Upper lobe of right lung (tissue), 1 donor: ENCODE measurements at regions of chr6 and their contacts with region 1.

Region 1: DNA sequence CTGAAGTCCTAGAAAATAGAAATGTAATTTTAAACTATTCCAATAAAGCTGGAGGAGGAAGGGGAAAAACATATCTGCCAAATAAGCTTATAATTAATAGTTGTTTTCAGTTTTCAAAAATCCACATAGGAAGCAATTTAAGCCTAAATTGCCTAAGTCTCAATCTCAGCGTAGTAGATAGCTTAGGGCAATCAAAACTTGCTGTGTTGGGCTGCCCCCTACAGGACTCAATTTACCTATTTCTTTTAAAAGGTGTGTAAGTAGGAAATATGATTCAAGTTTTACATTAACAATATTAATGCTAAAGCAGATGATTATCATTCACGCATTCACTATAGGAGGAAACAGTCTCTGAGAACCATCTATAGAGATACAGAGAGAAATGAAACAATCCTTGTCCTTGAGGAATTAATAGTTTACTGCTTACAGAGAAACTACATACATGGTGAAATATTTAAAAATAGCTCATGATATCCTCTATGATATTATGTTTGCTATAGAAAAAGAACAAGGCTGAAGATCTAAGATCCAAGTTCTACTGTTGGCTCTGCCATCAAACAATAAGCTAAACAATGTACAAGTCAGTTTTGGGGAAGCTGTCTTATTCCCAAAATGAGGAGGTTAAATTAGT is 102.1 kb downstream of the ATG5 start:
- DNase-seq: no peak
- ATAC-seq: peak; percentile 79
- H3K4me3 ChIP-seq: no peak overlapping the region
- H3K27ac ChIP-seq: no peak overlapping the region
- H3K4me1 ChIP-seq: no peaks in the 10 kb centered on the region
- H3K27me3 ChIP-seq: no peaks in the 10 kb centered on the region
- CTCF ChIP-seq: peak; percentile 68

Region 2: GRCh38 chr6:105484238-105485161 is 738.9 kb before region 1 on chr6:
- intact Hi-C with region 1: loop called (anchors 10 kb)
- DNase-seq: no peak
- ATAC-seq: peak; percentile 66
- H3K4me3 ChIP-seq: no peak overlapping the region
- H3K27ac ChIP-seq: no peak overlapping the region
- H3K4me1 ChIP-seq: peaks cover 16% of the 10 kb centered on the region
- H3K27me3 ChIP-seq: no peaks in the 10 kb centered on the region
- CTCF ChIP-seq: peak; percentile 89

Region 3: GRCh38 chr6:105644073-105644489 is 579.3 kb before region 1 on chr6:
- intact Hi-C with region 1: no loop called
- DNase-seq: no peak
- ATAC-seq: no peak
- H3K4me3 ChIP-seq: no peak overlapping the region
- H3K27ac ChIP-seq: no peak overlapping the region
- H3K4me1 ChIP-seq: peaks cover 13% of the 10 kb centered on the region
- H3K27me3 ChIP-seq: no peaks in the 10 kb centered on the region
- CTCF ChIP-seq: no peak